Activated CD4-positive, alpha-beta T cell treated with anti-CD3 and anti-CD28 coated beads for 36 hours (primary cell): ENCODE measurements at regions of chr16 and their contacts with region 1.

Region 1: DNA sequence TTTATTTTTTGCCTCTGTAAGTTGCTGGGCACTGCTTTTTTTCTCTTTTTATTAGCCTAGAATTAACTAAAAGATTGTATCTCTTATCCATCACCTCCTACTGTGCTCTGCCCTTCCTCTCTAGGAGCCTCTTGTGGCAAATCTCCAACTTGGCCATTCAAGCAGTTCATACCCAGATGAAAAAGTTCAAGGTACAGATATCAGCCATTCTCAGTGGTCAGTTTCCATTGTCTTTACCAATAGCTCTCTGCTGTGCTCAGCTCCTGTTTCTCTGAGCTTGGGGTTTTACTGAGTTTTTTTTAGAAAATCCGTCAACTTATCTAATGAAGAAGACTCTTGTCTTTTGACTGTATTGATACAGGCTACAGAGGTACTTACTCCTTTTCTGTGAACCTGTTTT is 15.6 kb downstream of the MOSMO start:
- DNase-seq: no peak
- ATAC-seq: no peak
- H3K4me3 Mint-ChIP-seq: no peak overlapping the region
- H3K27ac Mint-ChIP-seq: no peak overlapping the region
- H3K4me1 Mint-ChIP-seq: peaks cover 34% of the 10 kb centered on the region
- H3K27me3 Mint-ChIP-seq: no peaks in the 10 kb centered on the region

Region 2: GRCh38 chr16:21971856-21972255 is 51.6 kb before region 1 on chr16:
- CTCF ChIA-PET with region 1: no interaction called
- POLR2A ChIA-PET with region 1: no interaction called
- intact Hi-C with region 1: no loop called
- DNase-seq: no peak
- ATAC-seq: no peak
- H3K4me3 Mint-ChIP-seq: no peak overlapping the region
- H3K27ac Mint-ChIP-seq: no peak overlapping the region
- H3K4me1 Mint-ChIP-seq: no peaks in the 10 kb centered on the region
- H3K27me3 Mint-ChIP-seq: no peaks in the 10 kb centered on the region

Region 3: GRCh38 chr16:22035153-22035552 is 11.6 kb after region 1 on chr16:
- CTCF ChIA-PET with region 1: interaction called, 3 read pairs
- POLR2A ChIA-PET with region 1: no interaction called
- intact Hi-C with region 1: loop called in 1 of 2 experiments (anchors 2 kb)
- DNase-seq: peak; percentile 13
- ATAC-seq: peak; percentile 73
- H3K4me3 Mint-ChIP-seq: no peak overlapping the region
- H3K27ac Mint-ChIP-seq: peak overlapping the region; percentile 67
- H3K4me1 Mint-ChIP-seq: peaks cover 40% of the 10 kb centered on the region
- H3K27me3 Mint-ChIP-seq: no peaks in the 10 kb centered on the region